Prostate gland (tissue), 2 donors: ENCODE measurements at regions of chr17 and their contacts with region 1.

Region 1: GRCh38 chr17:1724506-1725362 is at the start of gene WDR81:
- DNase-seq: peak; percentile 92
- H3K4me3 ChIP-seq: peak within 1 kb of the TSS; percentile 64 to 68
- H3K27ac ChIP-seq: peak within 1 kb of the TSS; percentile 79 to 81
- H3K4me1 ChIP-seq: peaks cover 4% of the 10 kb centered on the region
- H3K27me3 ChIP-seq: no peaks in the 10 kb centered on the region
- CTCF ChIP-seq: peak in 1 of 4 experiments; percentile 27
- POLR2A ChIP-seq: peak; percentile 37
- total RNA-seq, gene WDR81: 39.2 to 72.9 TPM

Region 2: GRCh38 chr17:1783834-1784611 is 59.3 kb after region 1 on chr17:
- intact Hi-C with region 1: loop called (anchors 2 kb)
- DNase-seq: peak; percentile 68
- H3K4me3 ChIP-seq: no peak overlapping the region
- H3K27ac ChIP-seq: peak overlapping the region; percentile 90
- H3K4me1 ChIP-seq: peaks cover 25% of the 10 kb centered on the region
- H3K27me3 ChIP-seq: no peaks in the 10 kb centered on the region
- CTCF ChIP-seq: peak; percentile 35 to 91 (median 68)
- POLR2A ChIP-seq: no peak

Region 3: DNA sequence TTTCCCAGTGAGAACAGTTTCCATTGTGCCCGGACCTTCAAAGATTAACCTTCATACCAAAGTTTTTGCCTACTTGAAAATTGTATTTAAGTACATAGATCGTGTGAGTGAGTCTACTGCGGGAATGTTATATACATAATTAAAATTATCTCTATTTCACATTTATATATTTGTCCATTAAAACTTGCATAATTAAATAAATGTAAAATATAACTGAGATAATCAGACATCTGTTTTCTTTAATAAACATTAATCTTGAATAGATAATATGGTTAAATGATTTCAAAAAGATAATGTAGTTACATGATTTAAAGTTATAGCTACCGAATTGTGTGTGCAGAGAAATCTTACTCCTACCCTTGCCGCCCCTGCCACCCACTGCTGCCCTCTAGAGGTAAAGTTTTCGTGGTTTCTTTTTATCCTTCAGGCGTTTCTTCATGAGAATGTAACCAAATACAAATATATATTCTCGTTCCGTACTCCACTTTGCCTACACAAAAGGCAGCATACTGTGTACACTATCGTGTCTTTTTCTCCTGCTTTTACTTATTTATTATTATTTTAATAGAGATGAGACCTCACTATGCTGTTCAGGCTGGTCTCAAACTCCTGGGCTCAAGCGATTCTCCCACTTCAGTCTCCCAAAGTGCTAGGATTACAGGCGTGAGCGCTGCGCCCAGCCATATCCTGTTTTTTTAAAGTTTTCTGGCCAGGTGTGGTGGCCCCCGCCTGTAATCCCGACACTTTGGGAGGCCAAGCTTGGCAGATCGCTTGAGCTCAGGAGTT is 140.7 kb after region 1 on chr17:
- intact Hi-C with region 1: loop called (anchors 5 kb)
- DNase-seq: peak; percentile 23
- H3K4me3 ChIP-seq: no peak overlapping the region
- H3K27ac ChIP-seq: no peak overlapping the region
- H3K4me1 ChIP-seq: no peaks in the 10 kb centered on the region
- H3K27me3 ChIP-seq: no peaks in the 10 kb centered on the region
- CTCF ChIP-seq: peak in 3 of 4 experiments; percentile 50 to 57 (median 56)
- POLR2A ChIP-seq: no peak

Region 4: GRCh38 chr17:2029911-2030778 is 305.4 kb after region 1 on chr17 and contains the start of gene DPH1:
- intact Hi-C with region 1: loop called (anchors 5 kb)
- DNase-seq: peak; percentile 86
- H3K4me3 ChIP-seq: peak within 1 kb of the TSS; percentile 82 to 84
- H3K27ac ChIP-seq: peak within 1 kb of the TSS; percentile 61 to 62
- H3K4me1 ChIP-seq: no peaks in the 10 kb centered on the region
- H3K27me3 ChIP-seq: no peaks in the 10 kb centered on the region
- CTCF ChIP-seq: peak in 2 of 4 experiments; percentile 26 to 34
- POLR2A ChIP-seq: peak; percentile 47
- total RNA-seq, gene DPH1: 61.4 to 84.1 TPM